Activated CD4-positive, alpha-beta T cell treated with anti-CD3 and anti-CD28 coated beads, Interleukin-2, amount 10 ng/mL, durations not matched to agents 24 days and 14 days (primary cell): ENCODE measurements at regions of chr11 and their contacts with region 1.

Region 1: DNA sequence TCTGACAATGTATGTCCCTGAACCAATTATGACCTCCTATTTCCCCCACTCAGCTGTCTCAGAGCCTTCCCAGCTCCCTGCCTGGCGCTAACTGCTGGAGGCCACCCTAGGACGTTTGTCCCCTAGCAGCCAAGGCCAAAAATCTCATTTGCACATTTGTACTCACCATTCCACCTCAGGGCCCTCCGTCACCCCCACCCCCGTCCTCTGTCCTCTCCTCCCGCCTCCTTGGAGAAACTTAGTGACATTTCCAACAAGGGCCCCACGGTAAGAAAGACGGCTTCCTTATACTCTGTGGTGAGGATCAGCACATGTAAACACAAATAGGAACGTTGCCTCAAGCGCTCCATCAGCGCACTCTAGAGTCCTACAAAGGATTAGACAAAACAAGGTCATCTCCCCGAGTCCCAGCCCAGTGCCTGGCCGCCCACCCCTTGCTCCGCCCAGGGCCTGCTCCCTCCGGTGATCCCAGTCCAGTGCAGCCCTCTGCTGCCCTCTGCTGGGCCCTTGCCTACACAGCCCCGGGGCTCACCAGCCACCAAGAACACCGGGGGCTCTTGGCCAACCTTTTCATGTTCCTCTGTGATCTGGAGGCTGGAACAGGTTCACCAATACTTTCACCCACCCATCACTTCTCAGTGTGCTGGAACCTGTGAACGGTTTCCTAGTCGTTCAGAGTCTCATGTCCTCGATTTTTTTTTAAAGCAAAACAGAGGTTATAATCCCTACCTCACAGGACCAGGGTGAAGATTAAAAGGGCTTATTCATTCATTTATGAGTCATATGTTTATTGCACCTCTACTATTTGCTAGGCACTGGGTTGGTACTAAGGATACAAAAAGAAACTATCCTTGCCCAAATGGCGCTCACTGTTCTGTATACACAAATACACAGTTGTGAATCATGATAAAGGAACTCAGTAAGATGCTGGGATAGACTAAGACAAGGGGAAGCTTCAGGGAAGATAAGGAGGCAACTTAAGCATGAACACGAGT is 15.3 kb upstream of the CTR9 start:
- DNase-seq: peak; percentile 96
- H3K4me3 Mint-ChIP-seq: peak overlapping the region; percentile 45
- H3K27ac Mint-ChIP-seq: peak overlapping the region; percentile 41
- H3K4me1 Mint-ChIP-seq: peaks cover 8% of the 10 kb centered on the region
- H3K27me3 Mint-ChIP-seq: peaks cover 24% of the 10 kb centered on the region

Region 2: GRCh38 chr11:10405855-10406592 is 329.8 kb before region 1 on chr11:
- intact Hi-C with region 1: loop called (anchors 1 kb)
- DNase-seq: peak; percentile 83
- H3K4me3 Mint-ChIP-seq: no peak overlapping the region
- H3K27ac Mint-ChIP-seq: no peak overlapping the region
- H3K4me1 Mint-ChIP-seq: peaks cover 18% of the 10 kb centered on the region
- H3K27me3 Mint-ChIP-seq: peaks cover 3% of the 10 kb centered on the region

Region 3: GRCh38 chr11:10413268-10413667 is 322.5 kb before region 1 on chr11:
- intact Hi-C with region 1: loop called (anchors 1 kb)
- DNase-seq: peak; percentile 83
- H3K4me3 Mint-ChIP-seq: no peak overlapping the region
- H3K27ac Mint-ChIP-seq: no peak overlapping the region
- H3K4me1 Mint-ChIP-seq: peaks cover 32% of the 10 kb centered on the region
- H3K27me3 Mint-ChIP-seq: peaks cover 10% of the 10 kb centered on the region

Region 4: DNA sequence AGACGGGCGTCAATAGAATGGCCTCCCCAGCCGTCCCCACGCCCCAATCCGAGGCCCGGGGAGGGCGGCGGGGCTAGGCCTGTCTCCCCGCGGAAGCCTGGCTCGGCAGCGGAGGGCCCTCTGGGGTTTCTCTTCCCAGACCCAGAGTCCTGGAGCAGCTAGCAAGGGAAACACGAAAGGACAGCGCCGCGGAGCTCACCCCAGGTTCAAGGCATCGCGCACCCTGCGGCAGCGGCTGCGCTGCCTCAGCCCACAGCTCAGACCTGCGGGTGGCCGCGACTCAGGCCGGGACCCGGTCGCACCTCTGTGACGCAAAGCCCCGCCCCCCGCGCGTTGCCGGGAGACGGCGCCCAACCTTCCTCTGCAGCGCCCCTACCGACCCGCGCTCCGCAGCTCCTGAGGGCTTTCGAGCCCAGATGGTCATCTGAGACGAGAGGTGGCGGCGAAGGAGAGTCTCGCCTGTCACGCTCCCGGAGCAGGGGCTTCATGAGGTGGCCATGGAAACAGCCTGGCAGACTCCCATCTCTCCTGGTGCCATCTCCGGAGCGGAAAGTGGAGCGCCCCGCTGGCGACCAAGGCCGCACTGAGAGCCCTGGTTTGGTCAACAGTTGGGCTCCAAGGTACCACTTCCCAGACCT is 194.7 kb before region 1 on chr11 and contains the start of gene RNF141:
- intact Hi-C with region 1: loop called (anchors 1 kb)
- DNase-seq: peak; percentile 99
- H3K4me3 Mint-ChIP-seq: peak within 1 kb of the TSS; percentile 92
- H3K27ac Mint-ChIP-seq: peak within 1 kb of the TSS; percentile 78
- H3K4me1 Mint-ChIP-seq: peaks cover 14% of the 10 kb centered on the region
- H3K27me3 Mint-ChIP-seq: peaks cover 3% of the 10 kb centered on the region
- total RNA-seq, gene RNF141: 14.3 and 15.4 TPM in 2 replicates

Region 5: DNA sequence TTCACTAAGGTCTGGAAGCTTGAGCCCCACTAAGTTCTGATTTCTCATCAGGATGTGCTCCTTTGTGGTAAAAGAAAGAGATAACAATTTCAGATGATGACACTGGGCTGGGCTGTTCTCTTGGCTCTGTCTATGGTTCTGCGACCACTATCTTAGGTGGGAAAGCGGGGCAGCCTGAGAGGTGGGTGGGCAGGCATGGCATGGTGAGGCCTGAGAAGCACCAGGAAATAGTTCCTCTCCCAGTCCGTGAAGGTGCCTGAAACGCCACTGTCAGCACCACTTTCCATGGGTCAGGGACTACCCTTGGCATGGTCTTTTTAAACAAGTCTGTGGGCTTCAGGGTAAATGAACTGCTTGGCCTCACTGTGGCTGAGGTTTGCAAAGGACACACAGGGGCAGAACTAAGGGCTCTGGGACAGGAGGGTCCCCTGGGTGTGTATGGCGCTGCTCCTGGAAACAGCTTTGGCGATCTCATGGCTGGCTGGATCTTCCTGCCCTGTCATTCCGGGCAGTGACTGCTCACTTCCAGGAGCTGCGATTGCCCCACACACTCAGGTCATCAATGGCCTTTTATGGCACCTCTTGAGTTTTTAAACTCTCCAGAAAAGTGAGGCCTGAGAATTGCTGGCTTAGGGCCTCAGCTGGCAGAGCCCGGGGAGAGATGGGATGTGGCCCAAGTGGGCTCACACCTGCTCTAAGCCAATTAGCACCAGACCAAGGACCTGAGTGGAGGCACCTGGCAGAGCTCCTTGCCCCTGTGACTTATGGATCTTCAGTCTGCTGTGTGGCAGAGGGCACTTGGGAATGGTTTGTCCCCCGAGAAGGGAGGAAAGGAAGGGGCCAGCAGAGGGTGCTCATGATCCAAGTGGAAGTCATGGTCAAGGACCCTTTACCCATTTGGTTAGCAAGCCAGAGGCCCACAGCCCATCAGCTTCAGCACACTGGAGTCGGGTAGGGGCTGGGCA is 111.7 kb before region 1 on chr11:
- intact Hi-C with region 1: loop called (anchors 1 kb)
- DNase-seq: no peak
- H3K4me3 Mint-ChIP-seq: no peak overlapping the region
- H3K27ac Mint-ChIP-seq: peak overlapping the region; percentile 51
- H3K4me1 Mint-ChIP-seq: peaks cover 15% of the 10 kb centered on the region
- H3K27me3 Mint-ChIP-seq: no peaks in the 10 kb centered on the region

Region 6: DNA sequence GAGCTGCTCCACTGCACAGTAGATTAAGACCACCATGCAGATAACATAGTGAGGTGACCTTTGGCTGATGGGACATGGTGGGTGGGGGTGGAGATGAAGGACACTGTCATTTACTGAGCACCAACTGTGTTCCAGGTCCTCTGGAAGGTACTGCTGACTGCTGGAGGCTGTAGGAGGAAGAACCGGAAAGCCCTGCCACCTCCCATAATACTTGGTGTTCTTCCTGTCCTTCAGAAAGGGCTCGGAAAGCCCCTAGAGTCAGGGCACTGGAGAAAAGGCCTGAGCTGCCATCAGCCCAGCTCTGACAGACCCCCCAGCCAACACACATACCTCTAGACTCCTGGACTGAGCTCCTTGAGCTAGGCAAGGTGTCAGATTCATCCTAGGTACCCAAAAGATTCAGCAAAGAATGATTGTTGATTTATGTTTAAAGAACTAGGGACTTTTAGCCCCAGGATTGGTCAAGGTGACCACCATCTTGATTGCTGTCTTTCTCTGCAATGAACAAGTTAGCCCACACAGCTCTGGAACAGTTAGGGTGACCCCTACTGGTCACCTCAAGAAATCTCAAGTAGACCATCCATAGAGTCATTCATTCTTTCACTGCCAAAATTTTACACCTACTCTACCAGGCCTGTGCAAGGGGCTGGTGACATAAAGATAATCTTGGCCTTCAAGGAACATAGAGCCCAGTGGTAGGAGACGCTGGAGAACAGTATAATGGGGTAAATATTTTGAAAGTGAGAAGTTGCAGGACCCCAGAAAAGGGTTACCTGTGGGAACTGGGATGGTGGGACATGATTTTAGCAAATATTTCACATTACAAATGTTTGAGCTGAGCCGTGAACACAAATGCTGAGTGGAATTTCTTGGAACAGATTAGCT is 81.6 kb before region 1 on chr11:
- intact Hi-C with region 1: loop called (anchors 1 kb)
- DNase-seq: peak; percentile 80
- H3K4me3 Mint-ChIP-seq: no peak overlapping the region
- H3K27ac Mint-ChIP-seq: no peak overlapping the region
- H3K4me1 Mint-ChIP-seq: peaks cover 25% of the 10 kb centered on the region
- H3K27me3 Mint-ChIP-seq: no peaks in the 10 kb centered on the region